ENCODE measurements at regions of chr3 and their contacts with region 1.

Region 1: GRCh38 chr3:49757197-49757596 is 29.1 kb downstream of the IP6K1 start:
- DNase-seq: no peak
- ATAC-seq: no peak
- H3K4me3 ChIP-seq: no peak overlapping the region
- H3K27ac ChIP-seq: no peak overlapping the region
- H3K4me1 ChIP-seq: no peaks in the 10 kb centered on the region
- H3K27me3 ChIP-seq: no peaks in the 10 kb centered on the region
- CTCF ChIP-seq: no peak
- EP300 ChIP-seq: no peak
- POLR2A ChIP-seq: no peak
- RAD21 ChIP-seq: no peak

Region 2: GRCh38 chr3:49769286-49769915 is 12.2 kb after region 1 on chr3:
- CTCF ChIA-PET with region 1: interaction called, 3 read pairs
- POLR2A ChIA-PET with region 1: interaction called, 11 read pairs
- RAD21 ChIA-PET with region 1: no interaction called
- SMC1A ChIA-PET with region 1: interaction called, 4 read pairs
- in situ Hi-C with region 1: no loop called
- intact Hi-C with region 1: no loop called
- DNase-seq: no peak
- ATAC-seq: no peak
- H3K4me3 ChIP-seq: no peak overlapping the region
- H3K27ac ChIP-seq: no peak overlapping the region
- H3K4me1 ChIP-seq: no peaks in the 10 kb centered on the region
- H3K27me3 ChIP-seq: no peaks in the 10 kb centered on the region
- CTCF ChIP-seq: no peak
- EP300 ChIP-seq: no peak
- POLR2A ChIP-seq: no peak
- RAD21 ChIP-seq: no peak

Region 3: DNA sequence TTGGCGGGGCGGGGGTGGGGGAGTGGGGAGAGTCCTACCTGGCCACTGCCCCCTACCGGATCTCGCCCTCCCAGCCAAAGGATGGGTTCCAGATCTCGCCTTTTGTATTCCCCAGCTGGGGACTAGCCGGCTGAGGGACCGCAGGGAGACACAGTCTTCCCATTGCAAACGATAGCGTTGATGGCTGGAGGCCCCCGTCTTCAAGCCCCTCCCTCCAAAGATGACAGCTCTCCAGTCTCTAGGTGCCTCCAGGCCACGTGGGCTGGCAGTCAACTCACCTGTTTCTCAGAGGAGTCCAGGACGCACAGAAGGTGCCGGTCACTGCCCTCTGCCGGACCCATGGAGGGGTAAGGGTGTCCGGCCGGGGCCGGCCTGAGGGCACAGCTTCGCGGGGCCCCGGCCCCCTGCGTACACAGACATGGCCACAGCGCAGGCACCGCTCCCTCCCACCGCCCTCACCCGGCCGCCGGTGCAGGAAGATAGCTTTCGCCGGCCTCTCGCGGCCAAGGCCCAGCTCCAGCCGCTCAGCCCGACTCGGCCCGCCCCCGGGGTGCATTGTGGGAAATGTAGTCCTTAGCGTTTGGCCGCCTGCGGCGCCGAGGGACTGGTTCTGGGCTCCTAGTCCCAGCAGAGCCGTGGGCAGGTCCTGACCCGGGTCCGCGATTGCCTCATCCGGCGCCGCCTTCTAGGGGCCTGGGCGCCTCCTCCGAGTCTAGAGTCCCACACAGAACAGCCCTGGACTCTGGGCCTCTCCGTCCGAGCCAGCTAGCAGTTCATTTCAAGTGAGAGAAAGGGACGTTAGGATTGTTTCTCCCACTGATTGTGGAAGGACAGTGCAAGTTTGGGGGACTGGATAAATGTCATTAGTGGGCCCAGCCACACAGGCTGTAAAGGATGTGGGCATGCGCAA is 172.4 kb after region 1 on chr3 and contains the start of gene MON1A:
- CTCF ChIA-PET with region 1: no interaction called
- POLR2A ChIA-PET with region 1: no interaction called
- RAD21 ChIA-PET with region 1: no interaction called
- SMC1A ChIA-PET with region 1: no interaction called
- in situ Hi-C with region 1: no loop called
- intact Hi-C with region 1: no loop called
- DNase-seq: peak; percentile 40
- ATAC-seq: peak; percentile 97
- H3K4me3 ChIP-seq: peak within 1 kb of the TSS; percentile 76
- H3K27ac ChIP-seq: peak within 1 kb of the TSS; percentile 75
- H3K4me1 ChIP-seq: no peaks in the 10 kb centered on the region; the same call in 1 of the 2 replicates
- H3K27me3 ChIP-seq: no peaks in the 10 kb centered on the region
- CTCF ChIP-seq: peak; percentile 8 to 24 (median 16); a peak in 2 of 6 replicates
- EP300 ChIP-seq: no peak
- POLR2A ChIP-seq: peak; percentile 84
- RAD21 ChIP-seq: no peak
- polyA plus RNA-seq, gene MON1A: 1.3 to 2.4 TPM

Measured in GM12878 (cell line).